Endothelial cell of umbilical vein (primary cell): ENCODE measurements at regions of chr10 and their contacts with region 1.

Region 1: GRCh38 chr10:16545116-16545736 is 23.5 kb upstream of the C1QL3 start:
- DNase-seq: peak; percentile 43
- H3K4me3 ChIP-seq: no peak overlapping the region
- H3K27ac ChIP-seq: no peak overlapping the region
- H3K4me1 ChIP-seq: no peaks in the 10 kb centered on the region
- H3K27me3 ChIP-seq: peaks cover 0 to 1% of the 10 kb centered on the region in 2 experiments
- CTCF ChIP-seq: peak; percentile 63 to 67
- POLR2A ChIP-seq: no peak

Region 2: DNA sequence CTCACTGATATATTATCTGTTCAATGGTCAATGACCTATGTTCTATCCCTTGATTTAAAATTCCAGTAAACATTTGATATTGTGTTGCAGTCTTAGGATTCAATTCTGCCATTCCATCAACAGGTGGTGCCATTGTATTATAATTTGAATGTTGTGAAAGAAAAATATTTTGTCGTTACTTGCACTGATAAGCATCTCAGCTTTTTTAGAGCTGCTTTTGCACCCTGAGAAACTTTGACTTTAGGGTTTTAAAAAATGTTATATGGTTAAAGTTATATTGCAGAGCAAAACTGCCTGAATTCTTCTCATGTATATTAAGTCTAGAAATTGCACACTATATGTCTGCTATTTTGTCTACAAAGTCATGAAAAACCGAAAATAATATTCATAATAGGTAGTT is 666.2 kb before region 1 on chr10:
- CTCF ChIA-PET with region 1: interaction called, 7 read pairs
- POLR2A ChIA-PET with region 1: no interaction called
- dilution Hi-C with region 1: no loop called
- intact Hi-C with region 1: loop called (anchors 2 kb)
- DNase-seq: peak; percentile 66
- H3K4me3 ChIP-seq: no peak overlapping the region
- H3K27ac ChIP-seq: no peak overlapping the region
- H3K4me1 ChIP-seq: no peaks in the 10 kb centered on the region
- H3K27me3 ChIP-seq: peaks cover 15 to 23% of the 10 kb centered on the region in 2 experiments
- CTCF ChIP-seq: peak; percentile 18 to 55
- POLR2A ChIP-seq: no peak

Region 3: DNA sequence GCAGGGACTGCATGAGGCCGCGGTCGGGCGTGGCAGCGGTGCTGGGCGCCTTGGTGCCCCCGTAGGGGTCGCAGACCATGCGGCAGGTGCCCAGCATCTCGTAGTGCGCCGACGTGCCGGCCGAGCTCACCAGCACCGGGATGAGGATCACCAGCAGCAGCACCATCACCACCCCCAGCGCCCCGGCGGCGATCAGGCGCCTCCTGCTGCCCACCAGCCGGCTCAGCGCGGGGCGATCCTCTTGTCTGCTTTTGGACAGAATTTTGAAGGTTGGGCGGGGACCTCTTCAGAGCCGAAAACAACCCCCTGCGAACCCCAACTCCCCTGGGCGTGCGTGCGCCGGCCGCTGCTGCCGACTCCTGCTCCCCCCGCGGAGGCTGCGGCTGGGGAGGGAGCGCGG is 24.3 kb before region 1 on chr10:
- CTCF ChIA-PET with region 1: interaction called, 11 read pairs
- POLR2A ChIA-PET with region 1: no interaction called
- dilution Hi-C with region 1: no loop called
- intact Hi-C with region 1: no loop called
- DNase-seq: no peak
- H3K4me3 ChIP-seq: peak overlapping the region in 2 of 3 experiments; percentile 25 to 43
- H3K27ac ChIP-seq: no peak overlapping the region
- H3K4me1 ChIP-seq: peaks cover 12% of the 10 kb centered on the region
- H3K27me3 ChIP-seq: peaks cover 40 to 76% of the 10 kb centered on the region in 2 experiments
- CTCF ChIP-seq: peak; percentile 7 to 53
- POLR2A ChIP-seq: no peak

Region 4: DNA sequence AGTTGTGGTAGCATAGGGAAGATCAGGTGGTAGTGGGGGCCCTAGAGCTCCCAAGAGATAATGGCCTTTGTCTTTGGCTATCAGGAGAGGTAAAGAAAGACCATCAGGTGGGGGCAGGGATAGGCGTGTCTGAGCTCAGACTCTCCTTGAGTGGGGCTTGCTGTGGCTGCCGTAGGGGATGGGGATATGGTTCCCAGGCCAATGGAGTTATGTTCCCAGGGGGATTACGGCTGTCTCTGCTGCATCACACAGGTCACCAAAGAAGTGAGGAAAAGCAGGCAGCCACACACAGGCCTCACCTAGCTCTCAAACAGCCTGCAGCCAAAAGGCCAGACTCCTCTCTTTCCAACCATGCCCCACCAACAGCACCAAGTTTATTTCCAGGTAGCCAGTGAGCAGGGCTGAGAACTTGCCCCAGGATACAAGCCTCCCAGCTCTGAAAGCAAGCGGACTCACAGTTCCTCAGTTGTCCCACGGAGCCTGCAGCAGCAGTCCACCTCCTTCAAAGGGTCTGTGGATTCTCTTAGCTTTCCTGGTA is 14.1 kb after region 1 on chr10:
- CTCF ChIA-PET with region 1: interaction called, 23 read pairs
- POLR2A ChIA-PET with region 1: no interaction called
- dilution Hi-C with region 1: no loop called
- intact Hi-C with region 1: no loop called
- DNase-seq: no peak
- H3K4me3 ChIP-seq: no peak overlapping the region
- H3K27ac ChIP-seq: no peak overlapping the region
- H3K4me1 ChIP-seq: no peaks in the 10 kb centered on the region
- H3K27me3 ChIP-seq: no peaks in the 10 kb centered on the region
- CTCF ChIP-seq: no peak
- POLR2A ChIP-seq: no peak

Region 5: GRCh38 chr10:16583382-16583781 is 38.2 kb after region 1 on chr10:
- CTCF ChIA-PET with region 1: interaction called, 3 read pairs
- POLR2A ChIA-PET with region 1: no interaction called
- dilution Hi-C with region 1: no loop called
- intact Hi-C with region 1: loop called (anchors 2 kb)
- DNase-seq: no peak
- H3K4me3 ChIP-seq: no peak overlapping the region
- H3K27ac ChIP-seq: no peak overlapping the region
- H3K4me1 ChIP-seq: no peaks in the 10 kb centered on the region
- H3K27me3 ChIP-seq: peaks cover 3 to 5% of the 10 kb centered on the region in 2 experiments
- CTCF ChIP-seq: no peak
- POLR2A ChIP-seq: no peak

Region 6: DNA sequence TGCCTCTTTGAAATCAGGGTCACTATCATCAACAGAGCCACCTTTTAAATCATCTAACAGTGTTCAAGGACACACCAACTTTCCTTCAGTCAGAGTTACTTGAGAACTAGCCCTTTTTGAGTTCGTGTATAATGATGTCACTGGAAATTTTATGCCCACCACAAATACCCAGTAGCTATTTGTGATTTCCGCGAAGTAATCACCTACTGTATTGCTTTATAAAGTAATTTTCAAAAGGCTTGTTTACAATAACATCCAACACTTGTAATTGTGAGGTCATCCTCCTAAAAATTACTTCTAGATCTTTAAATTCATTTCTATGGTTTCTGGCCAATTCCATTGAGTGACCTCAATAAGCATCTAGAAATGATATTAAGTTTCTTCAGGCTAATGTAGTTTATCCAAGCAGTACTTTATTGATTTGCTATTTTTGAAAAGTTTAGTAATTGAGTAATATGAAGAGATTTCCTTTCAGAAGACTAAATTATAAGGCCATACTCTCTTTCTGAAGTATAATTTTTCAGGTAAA is 643.5 kb after region 1 on chr10:
- CTCF ChIA-PET with region 1: no interaction called
- POLR2A ChIA-PET with region 1: no interaction called
- dilution Hi-C with region 1: no loop called
- intact Hi-C with region 1: no loop called
- DNase-seq: no peak
- H3K4me3 ChIP-seq: no peak overlapping the region
- H3K27ac ChIP-seq: no peak overlapping the region
- H3K4me1 ChIP-seq: no peaks in the 10 kb centered on the region
- H3K27me3 ChIP-seq: no peaks in the 10 kb centered on the region
- CTCF ChIP-seq: no peak
- POLR2A ChIP-seq: no peak

Region 7: DNA sequence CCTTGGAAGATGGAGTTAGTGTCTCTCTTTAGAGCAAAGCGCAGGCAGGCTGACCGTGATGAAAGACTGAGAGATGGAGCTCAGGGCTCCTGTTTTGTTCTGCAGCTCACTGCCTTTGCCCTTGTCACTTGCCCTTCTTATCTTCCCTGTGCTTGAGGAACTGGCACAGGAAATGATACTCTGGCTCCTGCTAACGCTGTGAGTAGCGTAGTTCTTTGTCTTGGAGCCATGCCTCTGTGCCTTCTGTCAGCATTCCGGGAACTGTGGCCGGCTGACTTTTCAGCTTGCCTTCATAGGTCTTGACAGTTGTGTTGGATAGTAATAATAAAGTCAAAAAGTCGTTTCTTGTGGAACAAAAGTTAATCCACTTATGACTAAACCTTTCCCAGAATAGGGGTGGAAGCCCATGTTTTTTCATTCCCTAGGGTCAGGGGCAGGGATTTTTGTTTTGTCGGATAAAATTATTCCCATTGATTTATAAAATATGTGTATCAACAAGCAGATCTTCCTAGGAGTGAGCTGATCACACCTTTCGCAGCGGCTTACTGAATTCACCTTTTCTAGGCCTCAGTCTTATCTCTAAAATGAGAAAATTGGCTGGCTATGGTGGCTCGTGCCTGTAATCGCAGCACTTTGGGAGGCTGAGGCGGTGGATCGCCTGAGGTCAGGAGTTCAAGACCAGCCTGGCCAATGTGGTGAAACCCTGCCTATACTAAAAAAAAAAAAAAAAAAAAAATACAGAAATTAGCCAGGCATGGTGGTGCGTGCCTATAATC is 1190.1 kb after region 1 on chr10:
- CTCF ChIA-PET with region 1: no interaction called
- POLR2A ChIA-PET with region 1: no interaction called
- dilution Hi-C with region 1: no loop called
- intact Hi-C with region 1: no loop called
- DNase-seq: peak; percentile 81
- H3K4me3 ChIP-seq: no peak overlapping the region
- H3K27ac ChIP-seq: peak overlapping the region; percentile 40
- H3K4me1 ChIP-seq: peaks cover 9% of the 10 kb centered on the region
- H3K27me3 ChIP-seq: no peaks in the 10 kb centered on the region
- CTCF ChIP-seq: no peak
- POLR2A ChIP-seq: no peak